ENCODE measurements at regions of chr1 and their contacts with region 1.

Region 1: GRCh38 chr1:61851849-61852669 is 109.8 kb downstream of the PATJ start:
- DNase-seq: peak; percentile 47
- ATAC-seq: peak; percentile 65
- H3K4me3 ChIP-seq: no peak overlapping the region
- H3K27ac ChIP-seq: no peak overlapping the region
- H3K4me1 ChIP-seq: no peaks in the 10 kb centered on the region
- H3K27me3 ChIP-seq: no peaks in the 10 kb centered on the region
- CTCF ChIP-seq: peak; percentile 66
- EP300 ChIP-seq: no peak
- POLR2A ChIP-seq: no peak
- RAD21 ChIP-seq: peak; percentile 16; the same call in 1 of the 2 replicates

Region 2: DNA sequence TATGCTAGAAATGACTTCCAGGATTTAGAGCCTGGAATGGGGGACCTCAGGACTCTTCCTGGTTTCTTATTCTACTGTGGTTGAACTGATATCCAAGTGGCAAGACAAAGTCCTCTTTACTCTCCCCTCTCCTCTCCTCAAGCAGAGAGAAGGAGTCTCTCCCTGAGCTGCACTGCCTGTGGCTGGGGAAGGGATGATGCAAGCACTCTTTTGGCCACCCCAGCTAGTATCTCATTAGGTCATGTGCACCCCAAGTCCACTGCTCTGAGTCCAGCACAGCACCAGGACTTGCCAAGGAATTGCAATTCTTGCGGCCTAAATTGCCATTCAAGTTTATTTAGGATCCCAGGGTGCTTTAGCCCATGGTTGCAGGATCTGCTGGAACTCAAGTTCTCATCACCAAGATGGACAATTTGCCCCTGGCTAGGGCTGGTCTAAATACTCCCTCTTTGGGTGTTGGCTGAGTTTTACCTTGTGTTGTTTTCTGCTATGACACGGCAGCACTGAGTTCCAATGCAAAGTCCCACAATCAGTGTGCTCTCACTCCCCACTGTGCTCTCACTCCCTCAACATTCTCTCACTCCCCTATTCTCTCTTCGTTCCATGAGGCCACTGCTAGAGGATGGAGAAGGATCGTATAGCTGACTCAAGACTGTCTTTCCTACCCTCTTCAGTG is 299.3 kb before region 1 on chr1:
- CTCF ChIA-PET with region 1: interaction called, 3 read pairs
- POLR2A ChIA-PET with region 1: no interaction called
- in situ Hi-C with region 1: no loop called
- intact Hi-C with region 1: loop called (anchors 1 kb)
- DNase-seq: no peak
- ATAC-seq: no peak
- H3K4me3 ChIP-seq: no peak overlapping the region
- H3K27ac ChIP-seq: no peak overlapping the region
- H3K4me1 ChIP-seq: no peaks in the 10 kb centered on the region; the same call in 1 of the 2 replicates
- H3K27me3 ChIP-seq: no peaks in the 10 kb centered on the region; a peak in 2 of 5 replicates
- CTCF ChIP-seq: no peak
- EP300 ChIP-seq: no peak
- POLR2A ChIP-seq: no peak
- RAD21 ChIP-seq: no peak

Measured in HepG2 (cell line).